Body of pancreas (tissue), 4 donors: ENCODE measurements at regions of chr1 and their contacts with region 1.

Region 1: DNA sequence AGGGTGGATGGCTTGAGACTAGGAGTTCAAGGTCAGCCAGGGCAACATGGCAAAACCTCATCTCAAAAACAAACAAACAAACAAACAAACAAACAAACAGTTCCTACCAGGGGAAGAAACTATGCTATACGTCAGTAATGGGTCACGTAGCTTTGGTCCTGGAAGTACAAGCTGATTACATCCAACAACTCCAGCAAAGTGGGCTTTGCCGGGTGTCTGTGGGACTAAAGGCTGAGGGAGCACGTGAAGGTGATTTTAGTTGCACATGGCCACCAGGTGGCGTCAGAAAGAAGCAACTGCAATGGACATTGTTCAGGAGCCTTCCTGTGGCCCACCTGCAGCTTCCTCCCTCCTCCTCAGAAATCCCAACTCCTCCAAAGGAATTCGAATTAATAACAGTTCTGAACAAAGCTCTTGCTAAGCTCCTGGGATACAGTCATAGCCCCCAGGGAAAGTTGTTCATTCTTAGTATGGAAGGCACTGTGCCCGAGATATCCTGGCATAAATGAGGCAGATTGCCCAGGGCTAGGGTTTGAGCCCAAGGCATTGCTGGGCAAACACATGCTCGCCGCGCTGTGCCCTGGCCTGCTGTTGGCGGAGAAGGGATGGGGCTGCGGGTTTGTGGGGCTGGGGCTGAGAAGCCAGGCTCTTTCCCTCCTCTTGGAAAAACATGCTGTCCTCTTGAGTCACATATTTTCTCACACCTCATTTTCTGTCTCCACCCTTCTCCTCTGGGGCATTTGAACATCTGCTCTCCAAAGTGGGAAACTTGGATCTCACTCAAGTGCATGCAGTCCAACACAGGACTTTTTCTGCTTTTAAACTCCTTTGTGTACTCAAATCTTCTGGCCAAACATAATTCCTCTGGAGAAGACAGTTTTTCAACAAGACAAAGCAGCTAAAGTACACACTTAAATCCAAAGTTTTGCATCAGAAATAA is 28.6 kb downstream of the AKNAD1 start:
- DNase-seq: peak; percentile 78 to 84 (median 80)
- ATAC-seq: peak; percentile 66
- H3K4me3 ChIP-seq: no peak overlapping the region
- H3K27ac ChIP-seq: no peak overlapping the region
- H3K4me1 ChIP-seq: peaks cover 9% of the 10 kb centered on the region
- H3K27me3 ChIP-seq: no peaks in the 10 kb centered on the region
- CTCF ChIP-seq: peak; percentile 53 to 73 (median 67)
- POLR2A ChIP-seq: no peak

Region 2: GRCh38 chr1:108661030-108661620 is 167.2 kb before region 1 on chr1 and contains the start of gene HENMT1:
- intact Hi-C with region 1: no loop called
- DNase-seq: peak; percentile 29 to 51 (median 50)
- ATAC-seq: peak; percentile 73
- H3K4me3 ChIP-seq: peak within 1 kb of the TSS; percentile 13 to 33
- H3K27ac ChIP-seq: peak within 1 kb of the TSS in 3 of 4 donors; percentile 53 to 86 (median 79)
- H3K4me1 ChIP-seq: peaks cover 8% of the 10 kb centered on the region
- H3K27me3 ChIP-seq: peaks cover 0 to 6% of the 10 kb centered on the region in 2 donors
- CTCF ChIP-seq: no peak
- POLR2A ChIP-seq: peak in 2 of 3 donors; percentile 26 to 36
- total RNA-seq, gene HENMT1: 1.3 to 1.6 TPM

Region 3: DNA sequence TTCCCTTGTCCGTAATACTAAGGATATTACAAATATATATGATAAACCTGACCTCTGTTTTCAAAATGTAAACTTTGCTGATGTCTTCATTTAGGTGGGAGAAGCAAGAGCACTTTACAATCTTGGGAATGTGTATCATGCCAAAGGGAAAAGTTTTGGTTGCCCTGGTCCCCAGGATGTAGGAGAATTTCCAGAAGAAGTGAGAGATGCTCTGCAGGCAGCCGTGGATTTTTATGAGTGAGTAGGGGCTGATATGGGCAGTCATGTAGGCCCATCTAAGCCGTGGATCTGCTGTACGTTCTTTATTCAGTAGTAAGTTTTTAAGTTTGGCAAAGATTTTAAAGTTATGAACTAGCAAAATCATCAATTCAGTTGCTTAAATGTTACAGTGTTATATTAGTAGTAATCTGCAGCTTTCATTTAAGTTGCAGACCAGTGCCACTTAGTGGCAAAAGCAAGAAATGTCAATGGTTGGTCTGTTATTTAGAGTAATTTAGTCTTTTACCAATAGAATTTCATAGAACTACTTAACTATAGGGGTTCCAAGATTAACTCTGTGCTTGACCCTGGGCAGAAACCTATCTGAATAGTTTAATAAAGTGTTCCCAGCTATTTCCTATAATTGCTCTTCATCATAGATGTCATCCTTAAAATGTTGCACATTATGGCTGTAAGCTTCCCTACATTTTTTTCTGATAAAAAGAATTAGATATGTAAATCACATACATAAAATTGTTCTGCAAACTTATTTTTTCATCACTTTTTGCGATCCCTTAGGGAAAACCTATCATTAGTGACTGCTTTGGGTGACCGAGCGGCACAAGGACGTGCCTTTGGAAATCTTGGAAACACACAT is 69.8 kb after region 1 on chr1:
- intact Hi-C with region 1: loop called (anchors 5 kb)
- DNase-seq: peak in 3 of 4 donors; percentile 32 to 59 (median 39)
- ATAC-seq: peak; percentile 65
- H3K4me3 ChIP-seq: no peak overlapping the region
- H3K27ac ChIP-seq: no peak overlapping the region
- H3K4me1 ChIP-seq: no peaks in the 10 kb centered on the region
- H3K27me3 ChIP-seq: no peaks in the 10 kb centered on the region
- CTCF ChIP-seq: peak; percentile 45 to 84 (median 67)
- POLR2A ChIP-seq: no peak

Region 4: GRCh38 chr1:109090196-109091077 is 262.1 kb after region 1 on chr1 and contains the start of gene TMEM167B:
- intact Hi-C with region 1: no loop called
- DNase-seq: peak; percentile 90 to 96 (median 92)
- ATAC-seq: peak; percentile 96
- H3K4me3 ChIP-seq: peak within 1 kb of the TSS; percentile 73 to 78
- H3K27ac ChIP-seq: peak within 1 kb of the TSS; percentile 90 to 95 (median 91)
- H3K4me1 ChIP-seq: peaks cover 30% of the 10 kb centered on the region
- H3K27me3 ChIP-seq: peaks cover 0 to 3% of the 10 kb centered on the region in 2 donors
- CTCF ChIP-seq: peak in 1 of 7 experiments; percentile 33
- POLR2A ChIP-seq: peak; percentile 27 to 88 (median 80)
- total RNA-seq, gene TMEM167B: 5.3 to 12.7 TPM

Region 5: DNA sequence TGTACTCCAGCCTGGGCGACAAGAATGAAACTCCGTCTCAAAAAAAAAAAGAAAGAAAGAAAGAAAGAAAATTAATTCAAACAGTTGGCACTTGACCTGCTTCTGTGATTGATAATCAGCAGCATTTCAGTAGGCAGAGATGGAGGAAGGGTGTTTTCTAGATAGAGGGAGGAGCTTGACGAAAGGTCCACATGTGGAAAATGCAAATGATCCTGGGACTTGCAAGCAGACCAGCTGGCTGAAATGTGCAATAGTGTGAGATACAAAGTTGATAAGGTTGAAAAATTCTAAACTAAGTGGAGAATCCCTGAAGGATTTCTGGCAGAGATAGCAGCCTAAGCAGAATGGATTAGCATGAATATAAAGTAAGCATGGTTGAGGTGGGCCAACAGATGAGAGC is 289.8 kb after region 1 on chr1:
- intact Hi-C with region 1: no loop called
- DNase-seq: no peak
- ATAC-seq: no peak
- H3K4me3 ChIP-seq: no peak overlapping the region
- H3K27ac ChIP-seq: peak overlapping the region in 3 of 4 donors; percentile 19 to 86 (median 64)
- H3K4me1 ChIP-seq: peaks cover 51% of the 10 kb centered on the region
- H3K27me3 ChIP-seq: no peaks in the 10 kb centered on the region
- CTCF ChIP-seq: no peak
- POLR2A ChIP-seq: no peak

Region 6: GRCh38 chr1:109263597-109264398 is 435.5 kb after region 1 on chr1:
- intact Hi-C with region 1: loop called (anchors 10 kb)
- DNase-seq: peak; percentile 93 to 97 (median 96)
- ATAC-seq: peak; percentile 98
- H3K4me3 ChIP-seq: no peak overlapping the region
- H3K27ac ChIP-seq: no peak overlapping the region
- H3K4me1 ChIP-seq: no peaks in the 10 kb centered on the region
- H3K27me3 ChIP-seq: no peaks in the 10 kb centered on the region
- CTCF ChIP-seq: peak; percentile 96 to 100 (median 100)
- POLR2A ChIP-seq: peak in 1 of 3 donors; percentile 12

Region 7: GRCh38 chr1:109739738-109740660 is 911.7 kb after region 1 on chr1:
- intact Hi-C with region 1: no loop called
- DNase-seq: peak; percentile 84 to 91 (median 86)
- ATAC-seq: peak; percentile 98
- H3K4me3 ChIP-seq: peak overlapping the region; percentile 37 to 50
- H3K27ac ChIP-seq: peak overlapping the region in 3 of 4 donors; percentile 48 to 81 (median 64)
- H3K4me1 ChIP-seq: peaks cover 20% of the 10 kb centered on the region
- H3K27me3 ChIP-seq: no peaks in the 10 kb centered on the region
- CTCF ChIP-seq: no peak
- POLR2A ChIP-seq: peak; percentile 82 to 98 (median 91)